ENCODE measurements at regions of chr9 and their contacts with region 1.

Region 1: GRCh38 chr9:96467784-96468183 is 17.8 kb downstream of the HABP4 start:
- DNase-seq: no peak
- ATAC-seq: no peak
- H3K4me3 ChIP-seq: no peak overlapping the region
- H3K4me3 Mint-ChIP-seq: no peak overlapping the region
- H3K27ac ChIP-seq: no peak overlapping the region
- H3K27ac Mint-ChIP-seq: no peak overlapping the region
- H3K4me1 ChIP-seq: no peaks in the 10 kb centered on the region
- H3K4me1 Mint-ChIP-seq: no peaks in the 10 kb centered on the region
- H3K27me3 ChIP-seq: no peaks in the 10 kb centered on the region
- H3K27me3 Mint-ChIP-seq: no peaks in the 10 kb centered on the region

Region 2: GRCh38 chr9:96136992-96137670 is 330.7 kb before region 1 on chr9:
- CTCF ChIA-PET with region 1: no interaction called
- POLR2A ChIA-PET with region 1: no interaction called
- DNase-seq: peak in 3 of 35 experiments; percentile 7 to 14 (median 13)
- ATAC-seq: no peak
- H3K4me3 ChIP-seq: no peak overlapping the region
- H3K4me3 Mint-ChIP-seq: peak overlapping the region in 1 of 3 donors; percentile 34
- H3K27ac ChIP-seq: peak overlapping the region; percentile 46
- H3K27ac Mint-ChIP-seq: no peak overlapping the region
- H3K4me1 ChIP-seq: peaks cover 0 to 6% of the 10 kb centered on the region in 2 experiments
- H3K4me1 Mint-ChIP-seq: peaks cover 7 to 14% (median 9%) of the 10 kb centered on the region in 3 donors
- H3K27me3 ChIP-seq: peaks cover 0 to 2% of the 10 kb centered on the region in 2 experiments
- H3K27me3 Mint-ChIP-seq: peaks cover 0 to 14% of the 10 kb centered on the region in 2 donors

Region 3: GRCh38 chr9:96344458-96345180 is 123.2 kb before region 1 on chr9:
- CTCF ChIA-PET with region 1: no interaction called
- POLR2A ChIA-PET with region 1: interaction called in 1 of 2 experiments, 10 read pairs
- DNase-seq: no peak
- ATAC-seq: no peak
- H3K4me3 ChIP-seq: no peak overlapping the region
- H3K4me3 Mint-ChIP-seq: no peak overlapping the region
- H3K27ac ChIP-seq: no peak overlapping the region
- H3K27ac Mint-ChIP-seq: no peak overlapping the region
- H3K4me1 ChIP-seq: no peaks in the 10 kb centered on the region
- H3K4me1 Mint-ChIP-seq: no peaks in the 10 kb centered on the region
- H3K27me3 ChIP-seq: no peaks in the 10 kb centered on the region
- H3K27me3 Mint-ChIP-seq: no peaks in the 10 kb centered on the region

Region 4: DNA sequence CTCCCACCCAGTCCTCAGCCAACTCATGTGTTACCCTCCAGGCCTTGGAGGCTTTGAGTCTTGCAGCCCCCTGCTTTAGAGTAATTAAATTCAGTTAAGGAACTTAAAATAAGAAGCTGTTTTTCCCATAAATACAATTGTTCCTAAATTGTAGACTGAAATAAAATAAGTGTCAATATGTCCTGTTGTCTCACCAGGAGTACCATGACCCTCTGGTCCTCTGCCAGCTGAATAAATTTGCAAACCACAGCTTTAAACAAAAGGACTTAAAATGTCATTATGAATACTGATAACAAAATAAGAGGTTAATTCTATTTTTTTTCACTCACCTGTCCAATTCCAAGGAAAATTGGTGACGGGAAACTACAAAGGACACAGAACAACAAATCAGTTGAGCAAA is 99.8 kb before region 1 on chr9:
- CTCF ChIA-PET with region 1: interaction called in 1 of 2 experiments, 4 read pairs
- POLR2A ChIA-PET with region 1: interaction called in 1 of 2 experiments, 11 read pairs
- DNase-seq: no peak
- ATAC-seq: no peak
- H3K4me3 ChIP-seq: no peak overlapping the region
- H3K4me3 Mint-ChIP-seq: no peak overlapping the region
- H3K27ac ChIP-seq: no peak overlapping the region
- H3K27ac Mint-ChIP-seq: no peak overlapping the region
- H3K4me1 ChIP-seq: no peaks in the 10 kb centered on the region
- H3K4me1 Mint-ChIP-seq: peaks cover 0 to 2% (median 0%) of the 10 kb centered on the region in 3 donors
- H3K27me3 ChIP-seq: no peaks in the 10 kb centered on the region
- H3K27me3 Mint-ChIP-seq: no peaks in the 10 kb centered on the region